ENCODE measurements at regions of chr1 and their contacts with region 1.

Region 1: GRCh38 chr1:91165033-91165654 is 143.3 kb upstream of the ZNF644 start:
- DNase-seq: peak; percentile 79 to 91 (median 84)
- ATAC-seq: peak; percentile 99
- H3K4me3 ChIP-seq: no peak overlapping the region
- H3K27ac ChIP-seq: no peak overlapping the region
- H3K4me1 ChIP-seq: no peaks in the 10 kb centered on the region
- H3K27me3 ChIP-seq: peaks cover 6 to 45% of the 10 kb centered on the region in 2 experiments
- CTCF ChIP-seq: peak; percentile 92 to 95 (median 94)
- EP300 ChIP-seq: no peak
- POLR2A ChIP-seq: no peak
- RAD21 ChIP-seq: peak; percentile 84 to 91

Region 2: GRCh38 chr1:90114521-90115141 is 1050.5 kb before region 1 on chr1:
- CTCF ChIA-PET with region 1: no interaction called
- POLR2A ChIA-PET with region 1: no interaction called
- in situ Hi-C with region 1: no loop called
- intact Hi-C with region 1: loop called (anchors 5 kb)
- DNase-seq: peak; percentile 27 to 60 (median 38)
- ATAC-seq: peak; percentile 74
- H3K4me3 ChIP-seq: no peak overlapping the region
- H3K27ac ChIP-seq: no peak overlapping the region
- H3K4me1 ChIP-seq: no peaks in the 10 kb centered on the region
- H3K27me3 ChIP-seq: no peaks in the 10 kb centered on the region; a peak in 1 of 5 replicates
- CTCF ChIP-seq: peak; percentile 51 to 76 (median 55); a peak in 5 of 6 replicates
- EP300 ChIP-seq: no peak
- POLR2A ChIP-seq: no peak
- RAD21 ChIP-seq: peak; percentile 73 to 88

Region 3: GRCh38 chr1:90616395-90616794 is 548.7 kb before region 1 on chr1:
- CTCF ChIA-PET with region 1: interaction called, 4 read pairs
- POLR2A ChIA-PET with region 1: no interaction called
- in situ Hi-C with region 1: no loop called
- intact Hi-C with region 1: loop called (anchors 1 kb)
- DNase-seq: peak; percentile 22 to 72 (median 38)
- ATAC-seq: peak; percentile 93
- H3K4me3 ChIP-seq: no peak overlapping the region
- H3K27ac ChIP-seq: no peak overlapping the region
- H3K4me1 ChIP-seq: no peaks in the 10 kb centered on the region
- H3K27me3 ChIP-seq: no peaks in the 10 kb centered on the region
- CTCF ChIP-seq: peak; percentile 62 to 69 (median 62)
- EP300 ChIP-seq: no peak
- POLR2A ChIP-seq: no peak
- RAD21 ChIP-seq: peak; percentile 41 to 66; a peak in 3 of 4 replicates

Region 4: DNA sequence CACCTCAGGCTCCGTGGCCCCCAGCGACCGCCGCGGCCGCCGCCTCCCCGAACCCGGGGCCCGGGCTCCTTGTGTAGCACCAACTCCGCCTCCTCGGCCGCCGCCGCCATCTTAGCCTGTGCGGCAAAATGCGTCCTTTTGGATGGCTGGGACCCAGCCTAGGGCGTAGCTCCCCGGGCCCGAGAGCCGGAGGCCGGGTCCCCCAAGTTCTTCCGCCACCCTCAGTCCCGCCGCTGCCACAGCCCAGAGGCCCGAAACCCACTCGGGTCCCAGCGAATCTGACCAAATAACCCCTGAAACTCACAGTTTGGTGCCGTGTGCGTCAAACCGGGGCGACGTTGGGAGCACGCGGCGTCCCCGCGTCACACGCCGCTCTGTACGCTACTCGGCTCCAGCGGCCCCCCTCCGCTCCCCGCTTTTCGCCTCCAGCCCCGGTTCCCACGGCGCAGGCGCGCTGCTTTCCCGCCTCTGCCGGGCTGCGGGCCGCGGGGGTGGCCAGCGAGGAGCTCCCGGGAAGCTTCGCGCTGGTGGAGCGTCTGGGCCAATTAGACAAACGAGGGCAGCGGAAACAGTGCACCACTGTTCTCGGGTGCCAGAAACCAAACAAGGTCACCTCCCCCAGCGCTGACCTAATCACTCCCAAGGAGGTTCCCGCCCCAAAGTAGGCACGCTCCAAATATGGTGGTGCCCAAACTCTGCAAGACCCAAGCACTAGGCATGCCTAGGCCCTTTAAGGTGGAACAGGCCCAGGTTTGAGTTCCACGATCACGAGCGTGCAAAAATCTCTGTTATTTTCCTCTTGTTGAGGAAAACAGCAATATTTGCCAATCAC is 143.2 kb before region 1 on chr1 and contains the start of gene ZNF644:
- CTCF ChIA-PET with region 1: no interaction called
- POLR2A ChIA-PET with region 1: interaction called, 3 read pairs
- in situ Hi-C with region 1: no loop called
- intact Hi-C with region 1: loop called (anchors 10 kb)
- DNase-seq: peak; percentile 90 to 94 (median 92)
- ATAC-seq: peak; percentile 86
- H3K4me3 ChIP-seq: peak within 1 kb of the TSS; percentile 83
- H3K27ac ChIP-seq: peak within 1 kb of the TSS; percentile 100
- H3K4me1 ChIP-seq: peaks cover 13 to 15% of the 10 kb centered on the region in 2 experiments; a peak in 4 of 5 replicates
- H3K27me3 ChIP-seq: no peaks in the 10 kb centered on the region
- CTCF ChIP-seq: peak in 1 of 3 experiments; percentile 7; a peak in 1 of 6 replicates
- EP300 ChIP-seq: peak; percentile 10; the same call in 1 of the 2 replicates
- POLR2A ChIP-seq: peak; percentile 92
- RAD21 ChIP-seq: no peak
- polyA plus RNA-seq, gene ZNF644: 39.8 to 48.4 TPM

Region 5: GRCh38 chr1:91325461-91325860 is 160.3 kb after region 1 on chr1:
- CTCF ChIA-PET with region 1: no interaction called
- POLR2A ChIA-PET with region 1: no interaction called
- in situ Hi-C with region 1: no loop called
- intact Hi-C with region 1: no loop called
- DNase-seq: no peak
- ATAC-seq: no peak
- H3K4me3 ChIP-seq: no peak overlapping the region
- H3K27ac ChIP-seq: no peak overlapping the region
- H3K4me1 ChIP-seq: no peaks in the 10 kb centered on the region
- H3K27me3 ChIP-seq: no peaks in the 10 kb centered on the region
- CTCF ChIP-seq: no peak
- EP300 ChIP-seq: no peak
- POLR2A ChIP-seq: no peak
- RAD21 ChIP-seq: no peak

Region 6: GRCh38 chr1:91335603-91336002 is 170.5 kb after region 1 on chr1:
- CTCF ChIA-PET with region 1: no interaction called
- POLR2A ChIA-PET with region 1: no interaction called
- in situ Hi-C with region 1: no loop called
- intact Hi-C with region 1: no loop called
- DNase-seq: no peak
- ATAC-seq: no peak; the same call in 2 of the 3 replicates
- H3K4me3 ChIP-seq: no peak overlapping the region
- H3K27ac ChIP-seq: no peak overlapping the region
- H3K4me1 ChIP-seq: no peaks in the 10 kb centered on the region
- H3K27me3 ChIP-seq: no peaks in the 10 kb centered on the region
- CTCF ChIP-seq: no peak
- EP300 ChIP-seq: no peak
- POLR2A ChIP-seq: no peak
- RAD21 ChIP-seq: no peak

Region 7: DNA sequence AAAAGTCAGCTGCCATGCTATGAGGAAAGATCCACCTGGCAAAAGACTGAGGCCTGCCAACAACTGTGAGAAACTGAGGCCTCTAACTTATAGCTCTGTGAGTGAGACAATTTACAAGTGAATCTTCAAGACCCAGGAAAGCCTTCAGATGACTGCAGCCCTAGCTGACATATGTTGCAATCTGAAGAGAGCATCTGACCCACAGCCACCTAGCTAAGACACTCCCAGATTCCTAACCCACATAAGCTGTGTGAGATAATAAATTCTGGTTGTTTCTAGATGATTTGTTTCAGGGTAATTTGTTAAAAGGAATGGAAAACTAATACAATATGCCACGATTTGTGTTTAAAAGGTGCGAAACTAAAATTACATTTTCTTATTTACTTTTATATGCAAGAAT is 184.4 kb after region 1 on chr1:
- CTCF ChIA-PET with region 1: no interaction called
- POLR2A ChIA-PET with region 1: no interaction called
- in situ Hi-C with region 1: no loop called
- intact Hi-C with region 1: no loop called
- DNase-seq: peak in 2 of 4 experiments; percentile 9 to 41
- ATAC-seq: peak; percentile 87
- H3K4me3 ChIP-seq: no peak overlapping the region
- H3K27ac ChIP-seq: no peak overlapping the region
- H3K4me1 ChIP-seq: 0 out of 5 replicates have a peak, but pooled peaks cover 0 to 2% of the 10 kb centered on the region in 2 experiments
- H3K27me3 ChIP-seq: no peaks in the 10 kb centered on the region
- CTCF ChIP-seq: no peak
- EP300 ChIP-seq: 0 out of 2 replicates have a peak, but pooled peaks have one; percentile 8
- POLR2A ChIP-seq: no peak
- RAD21 ChIP-seq: no peak

Region 8: GRCh38 chr1:91404151-91405012 is 239.2 kb after region 1 on chr1 and contains the start of gene HFM1:
- CTCF ChIA-PET with region 1: no interaction called
- POLR2A ChIA-PET with region 1: no interaction called
- in situ Hi-C with region 1: no loop called
- intact Hi-C with region 1: loop called (anchors 1 kb)
- DNase-seq: peak; percentile 85 to 95 (median 89)
- ATAC-seq: peak; percentile 98
- H3K4me3 ChIP-seq: peak within 1 kb of the TSS; percentile 76
- H3K27ac ChIP-seq: peak within 1 kb of the TSS; percentile 84
- H3K4me1 ChIP-seq: peaks cover 6 to 10% of the 10 kb centered on the region in 2 experiments; a peak in 3 of 5 replicates
- H3K27me3 ChIP-seq: no peaks in the 10 kb centered on the region
- CTCF ChIP-seq: peak in 2 of 3 experiments; percentile 20 to 29; a peak in 2 of 6 replicates
- EP300 ChIP-seq: peak; percentile 1; the same call in 1 of the 2 replicates
- POLR2A ChIP-seq: peak; percentile 96
- RAD21 ChIP-seq: no peak
- polyA plus RNA-seq, gene HFM1: 1.5 to 2.3 TPM

Region 9: GRCh38 chr1:91924146-91924545 is 759.0 kb after region 1 on chr1:
- CTCF ChIA-PET with region 1: interaction called, 3 read pairs
- POLR2A ChIA-PET with region 1: no interaction called
- in situ Hi-C with region 1: loop called (anchors 25 kb)
- intact Hi-C with region 1: loop called (anchors 10 kb)
- DNase-seq: no peak
- ATAC-seq: no peak
- H3K4me3 ChIP-seq: no peak overlapping the region
- H3K27ac ChIP-seq: no peak overlapping the region
- H3K4me1 ChIP-seq: no peaks in the 10 kb centered on the region
- H3K27me3 ChIP-seq: no peaks in the 10 kb centered on the region
- CTCF ChIP-seq: no peak
- EP300 ChIP-seq: no peak
- POLR2A ChIP-seq: no peak
- RAD21 ChIP-seq: no peak

Measured in K562 (cell line).